ENCODE measurements at regions of chr11 and their contacts with region 1.

Region 1: DNA sequence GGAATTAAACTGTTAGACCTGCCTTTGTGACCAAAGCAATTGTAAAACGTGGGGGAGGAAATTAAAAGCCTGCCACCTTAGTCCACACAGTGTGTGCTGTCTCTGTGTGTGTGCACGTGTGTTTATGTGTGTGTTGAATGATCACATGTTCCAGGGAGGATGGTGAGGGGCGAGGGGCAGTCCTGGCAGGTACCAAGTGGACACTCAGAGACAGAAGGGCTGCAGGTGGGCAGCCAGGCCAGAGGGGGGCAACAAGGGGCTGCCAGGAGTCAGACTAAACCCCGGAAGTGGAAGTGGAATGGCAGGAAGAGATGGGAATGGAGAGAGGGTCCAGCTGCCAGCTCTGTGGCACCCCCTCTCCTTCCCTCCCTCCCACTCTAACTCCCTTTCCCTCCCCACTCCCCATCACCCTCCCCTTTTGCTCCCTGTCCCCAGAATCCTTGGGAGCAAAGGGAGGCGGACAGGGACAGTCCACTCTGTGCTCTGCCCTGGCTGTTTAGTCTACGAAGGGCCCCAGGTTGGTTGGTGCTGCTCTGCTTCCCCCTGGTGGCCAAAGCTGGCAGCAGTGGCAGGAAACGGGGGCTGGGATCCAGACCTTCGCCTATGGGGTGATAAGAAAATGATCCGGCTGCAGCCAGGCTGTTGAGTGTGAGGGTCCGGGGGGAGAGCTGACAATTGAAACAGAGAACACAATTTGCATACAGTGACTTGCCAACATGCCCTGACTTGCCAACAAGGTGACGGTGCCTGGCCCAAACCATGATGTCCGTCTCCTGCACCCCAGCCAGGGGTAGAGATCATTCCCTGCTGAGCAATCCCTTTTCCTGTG is 24.4 kb downstream of the P2RY2 start:
- DNase-seq: peak; percentile 43 to 80 (median 60)
- ATAC-seq: peak; percentile 91
- H3K4me3 ChIP-seq: no peak overlapping the region
- H3K4me3 Mint-ChIP-seq: no peak overlapping the region
- H3K27ac ChIP-seq: no peak overlapping the region
- H3K27ac Mint-ChIP-seq: no peak overlapping the region
- H3K4me1 ChIP-seq: peaks cover 9% of the 10 kb centered on the region
- H3K4me1 Mint-ChIP-seq: no peaks in the 10 kb centered on the region
- H3K27me3 ChIP-seq: no peaks in the 10 kb centered on the region
- H3K27me3 Mint-ChIP-seq: no peaks in the 10 kb centered on the region
- CTCF ChIP-seq: peak; percentile 84

Region 2: DNA sequence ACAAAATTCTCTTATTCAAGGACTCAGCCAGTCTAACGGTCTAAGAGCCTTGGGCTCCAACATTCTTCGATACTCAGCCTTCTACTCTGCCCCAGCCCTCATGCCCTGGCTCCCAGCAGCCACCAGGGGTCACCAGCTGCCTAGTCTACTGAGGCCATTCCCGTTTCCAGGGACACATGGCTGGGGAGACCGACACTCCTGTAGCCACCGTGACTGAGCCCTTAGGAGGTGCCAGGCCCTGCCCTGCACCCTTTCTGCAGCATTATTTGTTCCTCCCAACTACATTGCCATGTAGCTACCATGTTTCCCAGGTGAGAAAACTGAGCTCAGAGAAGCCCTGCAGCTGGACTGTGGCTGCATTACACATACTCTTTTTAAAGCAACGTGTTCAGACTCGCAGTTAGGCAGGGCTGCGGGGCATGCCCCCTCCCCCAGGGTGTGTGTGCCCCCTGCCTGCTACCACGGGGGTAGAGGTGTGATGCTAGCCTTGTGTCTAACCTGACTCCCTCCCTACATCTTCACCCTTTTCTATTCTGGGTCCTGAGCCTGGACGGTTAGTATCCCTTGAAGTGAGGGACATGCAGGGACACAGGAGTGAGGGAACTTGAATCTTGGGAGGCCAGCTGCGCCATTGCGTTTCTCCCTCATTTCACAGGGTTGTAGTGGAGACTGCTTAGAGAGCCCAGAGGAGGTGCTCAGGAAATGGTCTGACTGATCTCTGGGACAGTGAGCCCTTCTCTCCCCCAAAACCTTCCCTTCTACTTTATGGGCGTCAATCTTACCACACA is 410.8 kb before region 1 on chr11:
- CTCF ChIA-PET with region 1: interaction called, 5 read pairs
- POLR2A ChIA-PET with region 1: interaction called, 3 read pairs
- intact Hi-C with region 1: loop called (anchors 5 kb)
- DNase-seq: peak; percentile 27 to 75 (median 49)
- ATAC-seq: peak; percentile 80
- H3K4me3 ChIP-seq: no peak overlapping the region
- H3K4me3 Mint-ChIP-seq: no peak overlapping the region
- H3K27ac ChIP-seq: peak overlapping the region in 1 of 2 donors; percentile 31
- H3K27ac Mint-ChIP-seq: peak overlapping the region; percentile 79
- H3K4me1 ChIP-seq: peaks cover 15% of the 10 kb centered on the region
- H3K4me1 Mint-ChIP-seq: peaks cover 13% of the 10 kb centered on the region
- H3K27me3 ChIP-seq: no peaks in the 10 kb centered on the region
- H3K27me3 Mint-ChIP-seq: no peaks in the 10 kb centered on the region
- CTCF ChIP-seq: peak; percentile 81

Region 3: DNA sequence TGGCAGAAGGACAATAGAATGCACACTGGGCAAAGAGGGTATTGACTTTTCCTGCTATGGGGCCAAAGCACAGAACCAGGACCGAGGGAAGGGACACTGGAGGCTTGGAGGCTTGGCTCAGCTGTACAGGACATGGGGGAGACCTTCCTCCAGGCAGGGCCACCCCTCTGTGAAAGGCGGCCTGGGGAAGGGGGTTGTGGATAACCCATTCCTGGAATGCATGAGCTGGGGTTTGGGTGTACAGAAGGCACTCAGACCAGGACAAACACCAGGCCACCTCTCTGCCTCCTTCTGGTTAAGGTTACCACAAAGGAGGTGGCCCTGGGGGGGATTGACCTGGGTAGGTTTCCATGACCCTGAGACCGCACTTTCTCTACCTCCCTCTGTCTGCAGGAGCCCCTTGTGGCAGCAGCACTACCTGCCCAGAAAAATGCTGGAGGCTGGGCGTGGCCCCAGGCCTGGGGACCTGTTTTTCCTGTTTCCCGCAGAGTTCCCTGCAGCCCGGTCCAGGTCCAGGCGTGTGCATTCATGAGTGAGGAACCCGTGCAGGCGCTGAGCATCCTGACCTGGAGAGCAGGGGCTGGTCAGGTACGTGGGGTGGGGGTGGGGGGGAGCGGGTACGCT is 14.8 kb before region 1 on chr11:
- CTCF ChIA-PET with region 1: no interaction called
- POLR2A ChIA-PET with region 1: no interaction called
- intact Hi-C with region 1: no loop called
- DNase-seq: peak in 1 of 14 experiments; percentile 14
- ATAC-seq: no peak
- H3K4me3 ChIP-seq: no peak overlapping the region
- H3K4me3 Mint-ChIP-seq: no peak overlapping the region
- H3K27ac ChIP-seq: no peak overlapping the region
- H3K27ac Mint-ChIP-seq: no peak overlapping the region
- H3K4me1 ChIP-seq: no peaks in the 10 kb centered on the region
- H3K4me1 Mint-ChIP-seq: no peaks in the 10 kb centered on the region
- H3K27me3 ChIP-seq: peaks cover 0 to 3% of the 10 kb centered on the region in 2 experiments
- H3K27me3 Mint-ChIP-seq: no peaks in the 10 kb centered on the region
- CTCF ChIP-seq: no peak

Region 4: GRCh38 chr11:73252577-73253195 is 10.2 kb after region 1 on chr11:
- CTCF ChIA-PET with region 1: no interaction called
- POLR2A ChIA-PET with region 1: no interaction called
- intact Hi-C with region 1: no loop called
- DNase-seq: peak in 3 of 14 experiments; percentile 6 to 24 (median 15)
- ATAC-seq: peak; percentile 57
- H3K4me3 ChIP-seq: no peak overlapping the region
- H3K4me3 Mint-ChIP-seq: no peak overlapping the region
- H3K27ac ChIP-seq: no peak overlapping the region
- H3K27ac Mint-ChIP-seq: no peak overlapping the region
- H3K4me1 ChIP-seq: no peaks in the 10 kb centered on the region
- H3K4me1 Mint-ChIP-seq: no peaks in the 10 kb centered on the region
- H3K27me3 ChIP-seq: no peaks in the 10 kb centered on the region
- H3K27me3 Mint-ChIP-seq: no peaks in the 10 kb centered on the region
- CTCF ChIP-seq: no peak